ENCODE measurements at regions of chr16 and their contacts with region 1.

Region 1: DNA sequence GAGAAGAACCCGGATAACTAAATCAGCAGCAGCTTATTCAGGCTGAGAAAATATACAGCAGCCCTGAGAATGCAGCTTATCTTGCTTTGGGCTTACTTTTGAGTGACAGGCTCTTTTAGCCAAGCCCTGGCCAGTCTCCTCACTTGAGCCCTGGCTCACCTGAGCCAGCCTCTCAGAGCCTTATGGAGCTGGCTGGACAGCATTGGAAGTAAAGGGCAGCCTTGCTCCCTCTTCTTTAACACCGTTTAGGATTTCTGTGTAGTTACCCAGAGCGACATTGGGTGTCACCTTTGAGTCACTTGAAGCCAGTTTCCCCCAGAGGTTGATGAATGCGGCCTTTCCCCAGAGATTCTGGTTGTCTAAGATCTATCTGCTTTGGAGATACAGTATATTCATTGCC is 7.7 kb upstream of the NPIPB2 start:
- DNase-seq: peak in 4 of 10 donors; percentile 30 to 48 (median 38)

Region 2: GRCh38 chr16:11994143-11995119 is 44.9 kb after region 1 on chr16:
- intact Hi-C with region 1: no loop called
- DNase-seq: peak in 5 of 10 donors; percentile 42 to 93 (median 58)

Region 3: DNA sequence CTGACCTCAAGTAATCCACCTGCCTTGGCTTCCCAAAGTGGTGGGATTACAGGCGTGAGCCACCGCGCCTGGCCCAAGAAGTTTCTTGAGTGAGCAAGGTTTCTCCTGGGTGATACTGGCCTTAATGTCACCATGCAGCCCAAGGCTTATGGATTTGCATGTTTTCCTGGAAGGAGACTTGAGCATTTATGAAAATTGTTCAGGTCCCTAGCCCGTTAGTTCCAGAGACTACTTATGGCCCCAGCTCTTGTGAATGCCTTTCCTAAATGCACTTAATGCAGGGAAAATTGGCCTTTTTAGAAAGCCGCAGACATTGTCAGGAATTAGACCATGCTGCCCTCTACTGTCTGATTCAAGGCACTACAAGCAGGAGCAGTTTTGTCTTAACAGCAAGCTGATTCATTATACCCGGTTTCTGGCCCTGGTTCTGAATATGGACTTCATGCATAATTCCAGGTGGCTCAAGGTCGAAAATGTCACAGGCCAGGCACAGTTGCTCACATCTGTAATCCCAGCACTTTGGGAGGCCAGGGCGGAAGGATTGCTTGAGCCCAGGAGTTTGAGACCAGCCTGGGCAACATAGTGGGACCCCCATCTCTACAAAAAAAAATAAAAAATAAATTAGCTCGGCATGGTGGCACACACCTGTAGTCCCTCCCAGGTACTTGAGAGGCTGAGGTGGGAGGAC is 118.3 kb after region 1 on chr16:
- intact Hi-C with region 1: loop called (anchors 1 kb)
- DNase-seq: peak in 8 of 10 donors; percentile 37 to 82 (median 64)

Measured in posterior cingulate gyrus (tissue), 11 donors.